H1 (cell line): ENCODE measurements at regions of chr4 and their contacts with region 1.

Region 1: DNA sequence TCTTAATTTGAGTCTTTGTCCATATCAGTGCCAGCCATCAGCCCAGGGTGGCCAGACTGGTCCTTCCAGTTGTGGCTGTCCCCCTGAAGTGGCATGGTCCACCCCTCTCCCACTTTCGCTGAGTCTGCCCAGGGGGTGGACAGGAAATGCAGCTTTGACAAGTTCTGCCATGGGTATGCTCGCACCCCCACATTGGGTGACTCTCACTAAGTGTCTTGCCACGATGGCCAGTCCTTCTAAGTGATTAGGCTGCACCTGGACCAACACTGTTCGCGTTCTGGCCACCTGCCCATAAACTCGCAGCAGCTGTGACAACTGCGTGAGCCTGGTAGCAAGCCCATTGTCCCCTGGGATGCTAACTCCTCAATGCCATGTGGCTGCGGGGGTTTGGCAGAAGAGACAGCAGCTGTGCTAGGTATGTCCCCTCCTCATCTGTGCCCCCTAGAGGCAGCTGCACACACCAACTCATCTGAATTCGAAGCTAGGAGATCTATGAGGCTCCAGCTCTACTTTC is 10.0 kb upstream of the LNX1 start:
- DNase-seq: peak; percentile 33 to 75
- H3K4me3 ChIP-seq: no peak overlapping the region
- H3K27ac ChIP-seq: no peak overlapping the region
- H3K4me1 ChIP-seq: peaks cover 0 to 4% (median 3%) of the 10 kb centered on the region in 4 experiments; a peak in 5 of 7 replicates
- H3K27me3 ChIP-seq: no peaks in the 10 kb centered on the region
- CTCF ChIP-seq: peak; percentile 63 to 81 (median 70)
- EP300 ChIP-seq: no peak
- POLR2A ChIP-seq: no peak
- RAD21 ChIP-seq: peak; percentile 65 to 78

Region 2: DNA sequence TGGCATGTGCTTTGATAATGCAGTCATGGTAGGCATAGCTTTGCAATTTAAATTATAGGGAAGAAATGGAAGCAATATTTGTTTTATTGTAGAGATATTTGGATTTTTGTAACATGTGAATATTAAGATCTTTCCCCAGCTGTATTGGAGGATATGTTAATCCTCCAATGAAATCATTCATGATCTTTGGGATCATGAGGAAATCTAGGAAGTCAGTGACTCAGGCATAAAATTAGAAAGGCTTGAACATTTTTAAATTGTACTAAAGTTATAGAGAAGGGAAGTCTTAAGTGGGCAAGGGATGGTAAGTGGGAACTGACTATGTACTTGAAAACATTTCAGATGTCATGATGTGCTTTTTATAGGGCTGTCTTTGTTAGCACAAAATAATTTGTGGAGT is 177.0 kb before region 1 on chr4:
- CTCF ChIA-PET with region 1: no interaction called
- POLR2A ChIA-PET with region 1: no interaction called
- DNase-seq: no peak
- H3K4me3 ChIP-seq: no peak overlapping the region
- H3K27ac ChIP-seq: no peak overlapping the region
- H3K4me1 ChIP-seq: no peaks in the 10 kb centered on the region
- H3K27me3 ChIP-seq: no peaks in the 10 kb centered on the region
- CTCF ChIP-seq: no peak
- EP300 ChIP-seq: no peak
- POLR2A ChIP-seq: no peak
- RAD21 ChIP-seq: no peak

Region 3: DNA sequence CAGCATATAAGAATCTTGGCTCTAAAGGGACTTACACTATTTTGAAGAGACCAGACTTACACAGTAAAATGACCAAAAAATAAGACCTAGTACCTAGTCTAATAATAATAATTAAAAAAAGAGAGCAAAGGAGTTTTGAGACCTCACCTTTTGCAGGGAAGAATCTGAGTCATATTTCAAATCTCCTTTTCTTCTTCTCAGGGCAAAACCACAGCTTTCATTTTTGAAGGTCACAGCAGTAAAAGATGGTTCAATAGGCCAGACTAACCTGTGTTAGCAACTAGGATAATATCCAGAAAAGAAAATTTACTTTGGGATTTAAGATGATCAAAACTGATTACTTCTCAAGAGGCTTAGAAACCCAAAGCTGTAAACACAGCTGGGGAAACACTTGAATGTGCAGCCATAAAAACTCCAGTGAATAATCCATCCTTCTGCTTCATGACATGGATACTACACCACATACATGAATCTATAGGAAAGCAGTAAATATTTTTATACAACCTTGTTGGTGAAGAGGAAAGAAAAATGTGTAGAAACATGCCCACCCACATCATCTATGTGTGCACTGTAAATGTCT is 15.9 kb after region 1 on chr4:
- CTCF ChIA-PET with region 1: interaction called, 18 read pairs
- POLR2A ChIA-PET with region 1: no interaction called
- DNase-seq: no peak
- H3K4me3 ChIP-seq: no peak overlapping the region
- H3K27ac ChIP-seq: no peak overlapping the region
- H3K4me1 ChIP-seq: no peaks in the 10 kb centered on the region
- H3K27me3 ChIP-seq: no peaks in the 10 kb centered on the region
- CTCF ChIP-seq: no peak
- EP300 ChIP-seq: no peak
- POLR2A ChIP-seq: no peak
- RAD21 ChIP-seq: no peak